HEK293 (cell line): ENCODE measurements at regions of chr2 and their contacts with region 1.

Region 1: GRCh38 chr2:149017116-149017985 is 21.1 kb upstream of the LYPD6B start:
- H3K4me3 ChIP-seq: no peak overlapping the region
- H3K27ac ChIP-seq: no peak overlapping the region
- H3K4me1 ChIP-seq: 0 out of 2 replicates have a peak, but pooled peaks cover 2% of the 10 kb centered on the region
- CTCF ChIP-seq: peak; percentile 55; the same call in 1 of the 2 replicates

Region 2: GRCh38 chr2:148914463-148914862 is 102.9 kb before region 1 on chr2:
- CTCF ChIA-PET with region 1: no interaction called
- POLR2A ChIA-PET with region 1: no interaction called
- H3K4me3 ChIP-seq: no peak overlapping the region
- H3K27ac ChIP-seq: no peak overlapping the region
- H3K4me1 ChIP-seq: no peaks in the 10 kb centered on the region
- CTCF ChIP-seq: no peak

Region 3: DNA sequence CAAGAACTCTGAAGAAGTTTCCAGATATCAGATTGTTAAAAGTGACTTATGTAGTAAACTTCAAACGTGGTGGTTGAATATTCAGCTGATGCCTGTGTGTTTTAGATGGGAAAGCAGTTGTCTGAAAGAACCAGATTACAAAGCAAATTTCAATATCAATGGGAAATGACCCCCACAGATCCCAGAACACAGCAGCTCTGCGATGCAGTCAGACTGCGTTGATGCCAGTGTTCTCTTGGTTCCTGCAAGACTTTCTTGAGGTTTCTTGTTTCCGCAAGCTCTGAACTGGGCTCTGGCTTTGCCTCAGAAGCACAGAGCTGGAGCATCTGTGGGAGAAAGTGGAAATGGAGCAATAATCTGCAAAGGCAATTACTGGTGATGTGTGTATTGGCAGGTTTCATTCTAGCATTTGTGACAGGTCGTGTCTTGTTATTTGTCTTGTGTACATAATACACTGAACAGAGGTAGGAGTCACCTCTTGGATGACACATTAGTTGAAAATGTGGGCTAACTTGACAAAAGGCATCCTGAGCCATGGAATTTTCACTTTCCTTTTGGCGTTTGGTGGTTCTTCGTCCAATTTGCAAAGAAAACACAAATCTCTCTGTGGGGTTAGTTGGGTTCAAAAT is 10.4 kb after region 1 on chr2:
- CTCF ChIA-PET with region 1: interaction called, 17 read pairs
- POLR2A ChIA-PET with region 1: no interaction called
- H3K4me3 ChIP-seq: no peak overlapping the region
- H3K27ac ChIP-seq: no peak overlapping the region
- H3K4me1 ChIP-seq: no peaks in the 10 kb centered on the region
- CTCF ChIP-seq: no peak

Region 4: GRCh38 chr2:149040451-149040850 is 23.1 kb after region 1 on chr2:
- CTCF ChIA-PET with region 1: interaction called, 18 read pairs
- POLR2A ChIA-PET with region 1: interaction called, 3 read pairs
- H3K4me3 ChIP-seq: no peak overlapping the region
- H3K27ac ChIP-seq: no peak overlapping the region
- H3K4me1 ChIP-seq: no peaks in the 10 kb centered on the region
- CTCF ChIP-seq: peak; percentile 52

Region 5: DNA sequence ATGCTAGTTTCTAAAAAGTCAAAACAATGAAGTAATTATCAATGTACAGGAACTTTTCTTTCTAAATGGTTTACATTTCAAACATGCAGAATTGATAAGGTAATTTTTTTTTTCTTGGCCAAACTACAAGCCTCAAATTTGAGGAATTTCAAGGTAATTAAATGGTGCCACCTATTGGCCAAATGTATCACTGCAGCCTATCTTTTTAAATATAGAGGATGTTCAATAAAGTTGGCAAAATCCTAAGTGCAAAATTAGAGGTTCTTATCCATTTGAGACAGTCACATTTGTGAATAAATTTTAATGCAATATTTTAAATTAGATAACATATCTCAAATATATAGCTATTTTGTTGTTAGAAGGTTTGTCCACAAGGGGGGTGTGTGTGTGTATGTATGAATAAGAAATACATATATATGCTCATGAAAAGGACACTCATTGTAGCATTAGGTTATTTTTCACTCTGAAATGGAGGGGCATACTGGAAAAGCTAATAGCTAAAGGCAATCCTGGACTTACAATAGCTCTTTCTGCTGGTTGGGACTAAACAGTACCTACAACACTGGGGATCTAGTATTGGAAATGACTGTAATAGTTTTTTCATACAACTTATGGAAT is 544.1 kb after region 1 on chr2:
- CTCF ChIA-PET with region 1: interaction called, 38 read pairs
- POLR2A ChIA-PET with region 1: no interaction called
- H3K4me3 ChIP-seq: no peak overlapping the region
- H3K27ac ChIP-seq: no peak overlapping the region
- H3K4me1 ChIP-seq: peaks cover 7% of the 10 kb centered on the region; the same call in 1 of the 2 replicates
- CTCF ChIP-seq: peak; percentile 71; the same call in 1 of the 2 replicates